ENCODE measurements at regions of chr11 and their contacts with region 1.

Region 1: GRCh38 chr11:110429731-110430266 is at the start of gene FDX1:
- DNase-seq: peak; percentile 79 to 84 (median 83)
- H3K4me3 ChIP-seq: peak within 1 kb of the TSS; percentile 57 to 86
- H3K4me3 Mint-ChIP-seq: peak within 1 kb of the TSS; percentile 95 to 99 (median 98)
- H3K27ac ChIP-seq: peak within 1 kb of the TSS; percentile 72
- H3K27ac Mint-ChIP-seq: peak within 1 kb of the TSS; percentile 92 to 99 (median 97)
- H3K4me1 ChIP-seq: peaks cover 42% of the 10 kb centered on the region
- H3K4me1 Mint-ChIP-seq: peaks cover 31 to 51% (median 39%) of the 10 kb centered on the region in 4 donors
- H3K27me3 ChIP-seq: no peaks in the 10 kb centered on the region
- H3K27me3 Mint-ChIP-seq: no peaks in the 10 kb centered on the region
- total RNA-seq, gene FDX1: 10.7 to 12.4 TPM

Region 2: GRCh38 chr11:110296226-110297075 is 133.3 kb before region 1 on chr11 and contains the start of gene RDX:
- CTCF ChIA-PET with region 1: interaction called, 8 read pairs
- POLR2A ChIA-PET with region 1: interaction called, 8 read pairs
- intact Hi-C with region 1: loop called (anchors 2 kb)
- DNase-seq: peak; percentile 39 to 61 (median 51)
- H3K4me3 ChIP-seq: peak within 1 kb of the TSS; percentile 61 to 62
- H3K4me3 Mint-ChIP-seq: peak within 1 kb of the TSS; percentile 87 to 94 (median 92)
- H3K27ac ChIP-seq: peak within 1 kb of the TSS; percentile 70
- H3K27ac Mint-ChIP-seq: peak within 1 kb of the TSS; percentile 22 to 94 (median 77)
- H3K4me1 ChIP-seq: peaks cover 44% of the 10 kb centered on the region
- H3K4me1 Mint-ChIP-seq: peaks cover 15 to 41% (median 27%) of the 10 kb centered on the region in 4 donors
- H3K27me3 ChIP-seq: no peaks in the 10 kb centered on the region
- H3K27me3 Mint-ChIP-seq: no peaks in the 10 kb centered on the region
- total RNA-seq, gene RDX: 22.4 to 26.5 TPM

Region 3: DNA sequence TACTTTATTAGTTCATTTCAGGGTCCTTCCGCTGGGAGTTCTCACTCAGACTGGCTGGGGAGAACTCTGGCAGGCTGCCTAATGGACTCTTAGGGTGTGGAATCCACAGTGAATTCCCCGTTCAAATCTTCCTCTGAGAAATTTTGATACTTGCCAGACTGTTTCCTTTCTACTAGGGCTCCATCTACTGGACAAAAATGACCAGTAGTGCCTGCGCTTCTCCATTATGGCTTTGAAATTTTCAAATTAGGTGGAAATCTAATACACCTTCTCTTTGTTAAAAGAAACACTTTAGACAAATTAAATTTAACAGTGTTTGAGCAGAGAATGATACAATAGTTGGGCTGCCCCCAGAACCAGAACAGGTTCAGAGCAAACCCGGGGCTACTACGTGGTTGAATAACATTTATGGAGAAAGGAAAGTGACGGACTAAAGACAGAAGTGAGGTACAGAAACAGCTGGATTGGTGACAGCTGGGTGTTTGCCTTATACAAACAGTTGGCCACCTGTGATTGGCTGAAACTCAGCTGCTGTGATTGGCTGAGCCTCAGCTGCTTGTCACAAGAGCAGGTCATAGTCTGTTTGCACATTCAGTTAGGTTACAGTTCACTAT is 53.0 kb before region 1 on chr11:
- CTCF ChIA-PET with region 1: interaction called, 53 read pairs
- POLR2A ChIA-PET with region 1: interaction called, 5 read pairs
- intact Hi-C with region 1: loop called (anchors 1 kb)
- DNase-seq: peak in 4 of 5 donors; percentile 30 to 40 (median 38)
- H3K4me3 ChIP-seq: no peak overlapping the region
- H3K4me3 Mint-ChIP-seq: no peak overlapping the region
- H3K27ac ChIP-seq: no peak overlapping the region
- H3K27ac Mint-ChIP-seq: no peak overlapping the region
- H3K4me1 ChIP-seq: peaks cover 11% of the 10 kb centered on the region
- H3K4me1 Mint-ChIP-seq: peaks cover 0 to 6% (median 5%) of the 10 kb centered on the region in 4 donors
- H3K27me3 ChIP-seq: no peaks in the 10 kb centered on the region
- H3K27me3 Mint-ChIP-seq: no peaks in the 10 kb centered on the region

Region 4: DNA sequence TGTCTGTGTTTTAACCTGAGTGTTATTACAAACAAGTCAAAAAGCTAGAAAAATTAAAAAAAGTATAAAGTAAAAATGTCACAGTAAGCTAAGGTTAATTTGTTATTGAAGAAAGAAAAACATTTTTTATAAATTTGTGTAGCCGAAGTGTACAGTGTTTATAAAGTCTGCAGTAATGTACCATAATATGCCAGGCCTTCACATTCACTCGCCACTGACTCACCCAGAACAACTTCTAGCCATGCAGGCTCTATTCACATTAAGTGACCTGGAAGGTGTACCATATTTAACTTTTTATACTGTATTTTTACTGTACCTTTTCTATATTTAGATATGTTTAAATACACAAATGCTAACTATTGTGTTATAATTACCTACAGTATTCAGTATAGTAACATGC is 14.7 kb before region 1 on chr11:
- CTCF ChIA-PET with region 1: interaction called, 12 read pairs
- POLR2A ChIA-PET with region 1: interaction called, 3 read pairs
- intact Hi-C with region 1: no loop called
- DNase-seq: no peak
- H3K4me3 ChIP-seq: no peak overlapping the region
- H3K4me3 Mint-ChIP-seq: no peak overlapping the region
- H3K27ac ChIP-seq: no peak overlapping the region
- H3K27ac Mint-ChIP-seq: no peak overlapping the region
- H3K4me1 ChIP-seq: no peaks in the 10 kb centered on the region
- H3K4me1 Mint-ChIP-seq: no peaks in the 10 kb centered on the region
- H3K27me3 ChIP-seq: no peaks in the 10 kb centered on the region
- H3K27me3 Mint-ChIP-seq: no peaks in the 10 kb centered on the region

Region 5: DNA sequence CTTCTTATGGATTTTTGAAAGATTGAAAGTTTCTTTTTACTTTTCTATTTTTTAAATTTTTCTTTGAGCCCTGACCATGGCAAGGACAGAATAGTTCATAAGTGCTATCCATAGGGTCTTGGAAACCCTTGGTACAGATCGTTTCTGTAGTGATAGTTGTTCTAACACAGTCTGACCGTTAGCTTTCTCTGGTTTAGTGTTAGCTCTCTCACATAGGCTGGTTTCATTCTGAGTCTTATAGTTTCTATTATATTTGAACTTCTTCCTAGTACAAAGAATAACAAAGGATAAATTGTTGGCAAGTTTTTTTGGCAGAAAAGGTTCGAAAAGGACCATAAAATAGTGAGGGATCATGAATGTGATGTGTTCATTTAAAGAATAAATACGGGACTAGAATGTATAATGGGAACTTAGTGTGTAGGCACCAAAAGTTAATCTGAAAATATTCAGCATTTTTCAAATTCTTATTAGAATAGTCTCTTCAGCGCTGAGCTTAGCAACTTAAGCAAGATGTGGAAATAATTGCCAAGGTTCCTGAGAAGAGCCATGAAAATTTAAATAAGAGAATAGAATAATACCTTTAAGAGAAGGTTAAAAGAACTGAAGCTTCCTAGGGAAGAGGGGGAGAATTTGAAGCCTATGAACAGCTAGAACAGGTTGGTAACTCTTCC is 24.0 kb after region 1 on chr11:
- CTCF ChIA-PET with region 1: interaction called, 104 read pairs
- POLR2A ChIA-PET with region 1: interaction called, 3 read pairs
- intact Hi-C with region 1: no loop called
- DNase-seq: no peak
- H3K4me3 ChIP-seq: no peak overlapping the region
- H3K4me3 Mint-ChIP-seq: peak overlapping the region in 2 of 8 donors; percentile 20 to 29
- H3K27ac ChIP-seq: no peak overlapping the region
- H3K27ac Mint-ChIP-seq: peak overlapping the region in 2 of 7 donors; percentile 12 to 17
- H3K4me1 ChIP-seq: peaks cover 30% of the 10 kb centered on the region
- H3K4me1 Mint-ChIP-seq: peaks cover 28 to 52% (median 41%) of the 10 kb centered on the region in 4 donors
- H3K27me3 ChIP-seq: no peaks in the 10 kb centered on the region
- H3K27me3 Mint-ChIP-seq: no peaks in the 10 kb centered on the region

Region 6: GRCh38 chr11:110497231-110497978 is 67.6 kb after region 1 on chr11:
- CTCF ChIA-PET with region 1: no interaction called
- POLR2A ChIA-PET with region 1: no interaction called
- intact Hi-C with region 1: no loop called
- DNase-seq: no peak
- H3K4me3 ChIP-seq: no peak overlapping the region
- H3K4me3 Mint-ChIP-seq: no peak overlapping the region
- H3K27ac ChIP-seq: no peak overlapping the region
- H3K27ac Mint-ChIP-seq: no peak overlapping the region
- H3K4me1 ChIP-seq: no peaks in the 10 kb centered on the region
- H3K4me1 Mint-ChIP-seq: no peaks in the 10 kb centered on the region
- H3K27me3 ChIP-seq: no peaks in the 10 kb centered on the region
- H3K27me3 Mint-ChIP-seq: no peaks in the 10 kb centered on the region

Region 7: DNA sequence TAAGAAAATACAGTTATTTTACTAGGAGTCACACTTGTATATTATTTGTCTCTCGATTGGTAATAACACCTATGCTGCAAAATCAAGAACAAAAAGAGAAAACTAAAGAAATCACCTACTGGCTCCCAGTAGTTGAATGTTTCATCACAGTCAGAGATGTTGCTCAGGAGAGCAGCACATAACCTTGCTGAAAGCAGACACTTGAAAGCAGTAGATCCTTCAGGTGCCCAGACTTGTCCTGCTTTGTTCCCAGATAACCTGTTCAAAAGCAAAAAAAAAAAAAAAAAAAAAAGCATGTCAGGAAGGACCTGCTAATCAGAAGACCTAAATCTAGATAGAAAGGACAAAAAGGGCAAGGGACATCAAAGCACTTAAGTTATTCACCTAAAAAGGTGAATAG is 1440.3 kb after region 1 on chr11:
- CTCF ChIA-PET with region 1: no interaction called
- POLR2A ChIA-PET with region 1: no interaction called
- intact Hi-C with region 1: no loop called
- DNase-seq: no peak
- H3K4me3 ChIP-seq: no peak overlapping the region
- H3K4me3 Mint-ChIP-seq: peak overlapping the region in 2 of 8 donors; percentile 21 to 54
- H3K27ac ChIP-seq: no peak overlapping the region
- H3K27ac Mint-ChIP-seq: peak overlapping the region in 2 of 7 donors; percentile 36 to 96
- H3K4me1 ChIP-seq: peaks cover 22% of the 10 kb centered on the region
- H3K4me1 Mint-ChIP-seq: peaks cover 10 to 37% (median 26%) of the 10 kb centered on the region in 4 donors
- H3K27me3 ChIP-seq: no peaks in the 10 kb centered on the region
- H3K27me3 Mint-ChIP-seq: no peaks in the 10 kb centered on the region